ENCODE measurements at regions of chr6 and their contacts with region 1.

Region 1: GRCh38 chr6:148973538-148974208 is 226.8 kb downstream of the UST start:
- DNase-seq: no peak
- ATAC-seq: no peak
- H3K4me3 ChIP-seq: no peak overlapping the region
- H3K4me3 Mint-ChIP-seq: no peak overlapping the region
- H3K27ac ChIP-seq: no peak overlapping the region
- H3K27ac Mint-ChIP-seq: no peak overlapping the region
- H3K4me1 ChIP-seq: no peaks in the 10 kb centered on the region
- H3K4me1 Mint-ChIP-seq: peaks cover 3% of the 10 kb centered on the region
- H3K27me3 ChIP-seq: no peaks in the 10 kb centered on the region
- H3K27me3 Mint-ChIP-seq: peaks cover 10% of the 10 kb centered on the region
- CTCF ChIP-seq: no peak

Region 2: DNA sequence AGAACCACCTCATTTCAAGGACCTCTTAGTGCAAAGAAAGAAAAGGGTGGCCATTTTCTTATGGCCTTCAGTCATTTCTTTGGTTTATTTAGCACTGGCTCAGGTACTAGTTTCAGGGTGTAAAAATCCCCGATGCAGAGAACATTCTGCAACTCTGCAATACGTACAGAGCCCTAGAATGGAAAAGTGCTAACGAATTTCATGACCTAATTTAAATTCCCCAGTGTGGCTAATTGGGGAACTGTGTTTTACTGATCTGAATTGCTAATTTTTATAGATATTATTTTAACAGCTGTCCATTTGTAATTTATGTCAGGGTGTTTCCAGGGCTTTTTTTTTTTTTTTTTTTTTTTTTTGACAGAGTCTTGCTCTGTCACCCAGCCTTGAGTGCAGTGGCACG is 66.1 kb before region 1 on chr6:
- CTCF ChIA-PET with region 1: no interaction called
- POLR2A ChIA-PET with region 1: no interaction called
- intact Hi-C with region 1: no loop called
- DNase-seq: no peak
- ATAC-seq: no peak
- H3K4me3 ChIP-seq: no peak overlapping the region
- H3K4me3 Mint-ChIP-seq: no peak overlapping the region
- H3K27ac ChIP-seq: no peak overlapping the region
- H3K27ac Mint-ChIP-seq: no peak overlapping the region
- H3K4me1 ChIP-seq: no peaks in the 10 kb centered on the region
- H3K4me1 Mint-ChIP-seq: no peaks in the 10 kb centered on the region
- H3K27me3 ChIP-seq: no peaks in the 10 kb centered on the region
- H3K27me3 Mint-ChIP-seq: no peaks in the 10 kb centered on the region
- CTCF ChIP-seq: no peak

Region 3: GRCh38 chr6:148928811-148929210 is 44.9 kb before region 1 on chr6:
- CTCF ChIA-PET with region 1: no interaction called
- POLR2A ChIA-PET with region 1: no interaction called
- intact Hi-C with region 1: loop called in 1 of 2 experiments (anchors 1 kb)
- DNase-seq: no peak
- ATAC-seq: no peak
- H3K4me3 ChIP-seq: no peak overlapping the region
- H3K4me3 Mint-ChIP-seq: no peak overlapping the region
- H3K27ac ChIP-seq: no peak overlapping the region
- H3K27ac Mint-ChIP-seq: no peak overlapping the region
- H3K4me1 ChIP-seq: no peaks in the 10 kb centered on the region
- H3K4me1 Mint-ChIP-seq: no peaks in the 10 kb centered on the region
- H3K27me3 ChIP-seq: no peaks in the 10 kb centered on the region
- H3K27me3 Mint-ChIP-seq: peaks cover 4% of the 10 kb centered on the region
- CTCF ChIP-seq: no peak

Region 4: GRCh38 chr6:148955441-148955840 is 18.2 kb before region 1 on chr6:
- CTCF ChIA-PET with region 1: no interaction called
- POLR2A ChIA-PET with region 1: no interaction called
- intact Hi-C with region 1: no loop called
- DNase-seq: no peak
- ATAC-seq: no peak
- H3K4me3 ChIP-seq: no peak overlapping the region
- H3K4me3 Mint-ChIP-seq: no peak overlapping the region
- H3K27ac ChIP-seq: no peak overlapping the region
- H3K27ac Mint-ChIP-seq: no peak overlapping the region
- H3K4me1 ChIP-seq: no peaks in the 10 kb centered on the region
- H3K4me1 Mint-ChIP-seq: no peaks in the 10 kb centered on the region
- H3K27me3 ChIP-seq: no peaks in the 10 kb centered on the region
- H3K27me3 Mint-ChIP-seq: peaks cover 3% of the 10 kb centered on the region
- CTCF ChIP-seq: no peak

Measured in CD8-positive, alpha-beta T cell (primary cell).